CD14-positive monocyte (primary cell): ENCODE measurements at regions of chr14 and their contacts with region 1.

Region 1: GRCh38 chr14:64540208-64541157 is at the start of gene HSPA2:
- DNase-seq: peak; percentile 97 to 98 (median 97)
- H3K4me3 ChIP-seq: peak within 1 kb of the TSS; percentile 42 to 86 (median 67)
- H3K4me3 Mint-ChIP-seq: peak within 1 kb of the TSS; percentile 97 to 99
- H3K27ac ChIP-seq: no peak within 1 kb of the TSS
- H3K27ac Mint-ChIP-seq: peak within 1 kb of the TSS; percentile 67 to 93 (median 80)
- H3K4me1 ChIP-seq: peaks cover 27 to 33% of the 10 kb centered on the region in 2 donors
- H3K4me1 Mint-ChIP-seq: peaks cover 35% of the 10 kb centered on the region
- H3K27me3 ChIP-seq: peaks cover 41 to 55% of the 10 kb centered on the region in 2 donors
- H3K27me3 Mint-ChIP-seq: peaks cover 51 to 71% (median 57%) of the 10 kb centered on the region in 3 donors
- CTCF ChIP-seq: peak; percentile 69
- polyA plus RNA-seq, gene HSPA2: 0.17 to 0.41 TPM in 2 of 3 donors, not detected in the other

Region 2: GRCh38 chr14:64503478-64504309 is 36.8 kb before region 1 on chr14 and contains the start of gene ZBTB25:
- intact Hi-C with region 1: loop called in 1 of 2 experiments (anchors 5 kb)
- DNase-seq: peak; percentile 90 to 98 (median 95)
- H3K4me3 ChIP-seq: peak within 1 kb of the TSS; percentile 49 to 91 (median 87)
- H3K4me3 Mint-ChIP-seq: peak within 1 kb of the TSS; percentile 96
- H3K27ac ChIP-seq: peak within 1 kb of the TSS; percentile 99
- H3K27ac Mint-ChIP-seq: peak within 1 kb of the TSS; percentile 97 to 99 (median 99)
- H3K4me1 ChIP-seq: peaks cover 49 to 67% of the 10 kb centered on the region in 2 donors
- H3K4me1 Mint-ChIP-seq: peaks cover 58% of the 10 kb centered on the region
- H3K27me3 ChIP-seq: no peaks in the 10 kb centered on the region
- H3K27me3 Mint-ChIP-seq: no peaks in the 10 kb centered on the region
- CTCF ChIP-seq: no peak
- polyA plus RNA-seq, gene ZBTB25: 3.2 to 8.7 (median 3.9) TPM

Region 3: GRCh38 chr14:64591809-64592208 is 51.3 kb after region 1 on chr14:
- intact Hi-C with region 1: no loop called
- DNase-seq: no peak
- H3K4me3 ChIP-seq: no peak overlapping the region
- H3K4me3 Mint-ChIP-seq: no peak overlapping the region
- H3K27ac ChIP-seq: no peak overlapping the region
- H3K27ac Mint-ChIP-seq: no peak overlapping the region
- H3K4me1 ChIP-seq: no peaks in the 10 kb centered on the region
- H3K4me1 Mint-ChIP-seq: no peaks in the 10 kb centered on the region
- H3K27me3 ChIP-seq: no peaks in the 10 kb centered on the region
- H3K27me3 Mint-ChIP-seq: peaks cover 0 to 4% (median 2%) of the 10 kb centered on the region in 3 donors
- CTCF ChIP-seq: no peak

Region 4: DNA sequence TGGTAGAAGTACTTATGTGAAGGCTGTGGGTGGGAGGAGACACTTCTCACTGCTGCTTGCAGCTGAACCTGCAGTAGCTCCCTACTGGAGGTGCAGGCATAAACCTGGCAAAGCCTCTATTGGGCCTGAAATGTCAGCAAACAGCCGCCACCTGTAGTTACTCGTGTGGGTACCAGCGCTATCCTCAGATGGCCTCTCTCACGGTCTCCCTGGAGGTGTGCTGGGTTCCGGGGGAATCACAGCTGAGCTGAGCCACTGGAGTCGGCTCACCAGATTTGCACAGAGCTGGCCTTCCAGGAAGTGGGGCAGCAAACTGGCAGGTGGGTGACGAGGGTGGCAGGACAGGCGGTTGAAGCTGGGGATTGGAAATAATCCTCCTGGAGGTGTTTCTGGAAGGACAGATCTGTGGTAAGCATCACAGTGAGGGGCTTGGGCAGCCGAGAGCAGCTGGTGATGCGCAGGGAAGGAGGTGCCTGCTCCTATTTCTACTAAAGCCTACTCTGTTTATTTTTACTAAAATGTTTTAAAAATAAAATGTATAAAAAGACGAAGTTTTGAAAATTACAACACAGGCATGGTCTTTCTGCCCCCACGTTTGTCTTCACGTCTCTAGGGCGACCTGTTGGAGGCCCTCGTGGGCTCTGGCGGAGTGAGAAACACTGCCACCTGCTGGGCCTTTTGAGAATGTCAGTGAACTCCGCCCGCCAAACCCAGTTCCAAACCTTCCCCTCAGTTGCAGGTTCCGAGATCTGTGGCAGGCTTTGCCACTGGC is 95.9 kb after region 1 on chr14:
- intact Hi-C with region 1: loop called in 1 of 2 experiments (anchors 5 kb)
- DNase-seq: peak; percentile 49 to 66 (median 64)
- H3K4me3 ChIP-seq: no peak overlapping the region
- H3K4me3 Mint-ChIP-seq: no peak overlapping the region
- H3K27ac ChIP-seq: no peak overlapping the region
- H3K27ac Mint-ChIP-seq: no peak overlapping the region
- H3K4me1 ChIP-seq: peaks cover 14% of the 10 kb centered on the region in 2 donors
- H3K4me1 Mint-ChIP-seq: peaks cover 16% of the 10 kb centered on the region
- H3K27me3 ChIP-seq: no peaks in the 10 kb centered on the region
- H3K27me3 Mint-ChIP-seq: peaks cover 0 to 4% (median 2%) of the 10 kb centered on the region in 3 donors
- CTCF ChIP-seq: peak; percentile 96

Region 5: DNA sequence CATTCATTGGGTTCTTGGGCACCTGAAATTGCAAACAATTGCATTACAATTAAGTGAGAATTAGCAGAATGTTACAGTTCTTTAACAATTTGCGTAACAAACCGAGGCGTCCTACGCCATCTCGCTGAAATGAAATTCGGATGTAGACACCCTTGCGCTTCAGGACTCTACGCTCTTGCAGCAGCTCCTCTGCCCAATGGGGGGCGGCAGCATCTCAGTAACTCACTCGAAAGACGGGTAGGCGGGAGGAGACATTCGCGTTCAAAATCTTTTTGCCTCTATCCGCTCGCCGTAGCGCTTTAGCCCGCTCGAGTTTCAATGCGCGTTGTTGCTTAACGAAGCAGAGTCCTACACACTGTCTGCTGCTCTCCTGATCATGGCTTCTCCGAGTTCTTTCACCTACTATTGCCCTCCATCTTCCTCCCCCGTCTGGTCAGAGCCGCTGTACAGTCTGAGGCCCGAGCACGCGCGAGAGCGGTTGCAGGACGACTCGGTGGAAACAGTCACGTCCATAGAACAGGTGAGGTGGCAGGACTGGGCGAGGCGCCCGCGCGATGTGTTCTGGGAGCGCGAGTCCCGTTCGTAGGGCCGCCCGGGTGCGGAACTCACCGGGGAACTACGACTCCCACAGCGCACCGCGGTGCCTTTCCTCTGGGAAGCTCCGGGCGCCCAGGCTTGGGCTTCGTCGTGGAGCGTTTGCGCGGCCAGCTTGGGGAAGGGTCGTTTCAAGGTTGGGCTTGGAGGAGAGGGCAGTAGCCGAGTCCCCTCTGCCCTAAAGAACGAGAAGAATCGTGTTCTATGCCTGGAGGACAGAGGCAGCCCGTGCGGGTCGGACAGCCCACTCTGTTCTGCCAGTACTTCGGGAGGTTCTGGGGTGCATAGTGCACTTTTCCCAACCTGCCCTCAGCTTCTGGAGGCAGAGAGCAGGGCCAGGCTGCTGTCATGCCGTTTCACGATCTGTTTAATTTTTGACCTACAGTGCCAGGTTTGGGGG is 446.4 kb after region 1 on chr14 and contains the start of gene FNTB:
- intact Hi-C with region 1: loop called in 1 of 2 experiments (anchors 10 kb)
- DNase-seq: peak; percentile 88 to 93 (median 91)
- H3K4me3 ChIP-seq: peak within 1 kb of the TSS; percentile 76 to 97 (median 82)
- H3K4me3 Mint-ChIP-seq: peak within 1 kb of the TSS; percentile 100
- H3K27ac ChIP-seq: peak within 1 kb of the TSS; percentile 57 to 83
- H3K27ac Mint-ChIP-seq: peak within 1 kb of the TSS; percentile 95 to 99 (median 97)
- H3K4me1 ChIP-seq: peaks cover 42 to 56% of the 10 kb centered on the region in 2 donors
- H3K4me1 Mint-ChIP-seq: peaks cover 53% of the 10 kb centered on the region
- H3K27me3 ChIP-seq: no peaks in the 10 kb centered on the region
- H3K27me3 Mint-ChIP-seq: peaks cover 1 to 14% (median 3%) of the 10 kb centered on the region in 3 donors
- CTCF ChIP-seq: no peak
- polyA plus RNA-seq, gene FNTB: 12.3 to 14.2 (median 14.1) TPM